GM12878 (cell line): ENCODE measurements at regions of chr1 and their contacts with region 1.

Region 1: DNA sequence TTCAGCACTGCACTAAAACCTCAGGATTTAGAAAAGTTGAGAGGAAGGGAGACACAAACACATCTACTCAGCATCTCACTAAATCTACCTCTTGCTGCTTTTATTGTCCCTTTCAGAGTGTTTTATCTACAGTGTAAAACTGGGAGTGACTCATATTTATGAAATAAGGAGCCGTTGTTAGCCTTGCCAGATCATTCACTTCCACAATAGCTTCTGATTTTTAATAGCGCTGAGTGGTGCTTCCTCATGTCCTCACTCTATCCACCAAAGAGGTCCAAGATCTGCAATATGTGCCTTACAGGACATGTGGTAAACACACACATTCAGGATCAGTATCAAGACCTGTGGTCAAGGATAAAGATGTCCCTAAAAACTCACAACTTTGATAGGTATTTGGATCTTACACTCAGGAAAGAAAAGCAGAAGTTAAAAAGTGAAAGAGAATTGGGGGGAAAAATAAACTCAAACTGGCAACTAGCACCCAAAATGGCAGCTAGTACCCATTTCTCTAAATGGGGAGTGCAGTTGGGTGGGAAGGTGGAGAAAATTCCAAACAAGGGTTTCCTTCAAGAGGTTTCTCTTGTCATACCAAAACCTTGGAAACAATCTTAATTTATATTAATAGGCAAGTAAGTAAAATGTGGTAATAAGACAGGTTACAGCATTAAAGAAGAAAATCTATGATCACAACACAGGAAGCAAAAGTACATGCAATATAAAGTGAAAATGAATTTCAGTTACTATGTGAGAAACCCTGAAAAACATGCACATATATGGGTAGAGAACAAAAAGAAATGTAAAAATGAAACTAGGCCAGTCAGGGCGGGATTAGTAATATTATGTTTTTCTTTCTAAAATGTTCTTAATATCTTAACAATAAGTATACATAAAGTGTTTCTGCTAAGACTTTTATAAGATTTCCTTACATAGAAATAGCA is 15.9 kb downstream of the DUSP10 start:
- DNase-seq: no peak
- ATAC-seq: peak; percentile 67
- H3K4me3 ChIP-seq: peak overlapping the region; percentile 6; the same call in 1 of the 2 replicates
- H3K27ac ChIP-seq: peak overlapping the region; percentile 92
- H3K4me1 ChIP-seq: peaks cover 52% of the 10 kb centered on the region
- H3K27me3 ChIP-seq: no peaks in the 10 kb centered on the region
- CTCF ChIP-seq: no peak
- EP300 ChIP-seq: no peak
- POLR2A ChIP-seq: no peak
- RAD21 ChIP-seq: no peak

Region 2: GRCh38 chr1:221449801-221450470 is 276.1 kb before region 1 on chr1:
- CTCF ChIA-PET with region 1: no interaction called
- POLR2A ChIA-PET with region 1: no interaction called
- RAD21 ChIA-PET with region 1: no interaction called
- SMC1A ChIA-PET with region 1: no interaction called
- in situ Hi-C with region 1: no loop called
- intact Hi-C with region 1: no loop called
- DNase-seq: no peak
- ATAC-seq: peak; percentile 78
- H3K4me3 ChIP-seq: no peak overlapping the region
- H3K27ac ChIP-seq: no peak overlapping the region
- H3K4me1 ChIP-seq: no peaks in the 10 kb centered on the region
- H3K27me3 ChIP-seq: no peaks in the 10 kb centered on the region
- CTCF ChIP-seq: no peak
- EP300 ChIP-seq: no peak
- POLR2A ChIP-seq: no peak
- RAD21 ChIP-seq: no peak

Region 3: GRCh38 chr1:221680085-221680484 is 45.9 kb before region 1 on chr1:
- CTCF ChIA-PET with region 1: no interaction called
- POLR2A ChIA-PET with region 1: no interaction called
- RAD21 ChIA-PET with region 1: no interaction called
- SMC1A ChIA-PET with region 1: no interaction called
- in situ Hi-C with region 1: no loop called
- intact Hi-C with region 1: no loop called
- DNase-seq: no peak
- ATAC-seq: no peak
- H3K4me3 ChIP-seq: no peak overlapping the region
- H3K27ac ChIP-seq: no peak overlapping the region
- H3K4me1 ChIP-seq: no peaks in the 10 kb centered on the region
- H3K27me3 ChIP-seq: no peaks in the 10 kb centered on the region
- CTCF ChIP-seq: no peak
- EP300 ChIP-seq: no peak
- POLR2A ChIP-seq: no peak
- RAD21 ChIP-seq: no peak

Region 4: DNA sequence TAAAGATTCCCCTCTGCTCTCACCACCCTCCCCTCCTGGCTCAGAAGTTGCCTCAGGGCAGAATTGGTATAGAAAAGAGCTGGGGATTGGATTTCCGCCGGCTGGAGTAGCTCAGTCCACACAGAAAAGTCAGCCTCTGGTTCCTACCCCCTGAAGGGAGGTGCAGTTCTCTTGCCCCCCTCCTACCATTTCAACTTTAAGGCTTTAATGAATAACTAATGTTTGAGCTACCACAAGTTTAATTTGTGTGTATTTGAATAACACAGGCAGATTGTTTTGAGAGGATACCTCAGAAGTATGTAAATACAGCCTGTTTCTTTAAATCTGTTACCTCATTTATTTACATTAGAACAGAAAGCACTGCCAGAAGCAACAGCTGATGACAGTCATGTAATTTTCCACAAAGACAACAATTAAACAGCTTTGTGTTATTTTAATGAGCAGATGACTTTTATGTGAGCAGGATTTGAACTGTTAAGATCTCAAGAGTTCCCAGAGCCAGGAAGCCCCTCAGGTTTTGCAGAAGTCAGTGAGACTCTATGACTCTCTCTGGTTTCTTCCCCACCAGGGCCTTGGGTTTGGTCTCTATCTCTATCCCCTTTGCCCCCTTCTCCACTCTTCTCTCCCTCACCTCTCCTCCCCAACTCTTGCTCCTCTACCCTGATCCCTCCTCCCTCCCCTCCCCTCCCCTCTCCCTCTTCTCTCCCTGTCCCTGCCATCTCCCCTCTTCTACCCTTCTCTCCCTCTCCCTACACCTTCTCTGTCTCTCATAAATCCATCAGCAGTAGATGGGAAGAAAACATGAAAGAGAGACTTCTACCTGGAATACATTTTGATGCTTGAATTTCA is 10.5 kb before region 1 on chr1:
- CTCF ChIA-PET with region 1: interaction called, 29 read pairs
- POLR2A ChIA-PET with region 1: interaction called, 194 read pairs
- RAD21 ChIA-PET with region 1: interaction called, 85 read pairs
- SMC1A ChIA-PET with region 1: interaction called, 292 read pairs
- in situ Hi-C with region 1: no loop called
- intact Hi-C with region 1: loop called (anchors 1 kb)
- DNase-seq: no peak
- ATAC-seq: no peak
- H3K4me3 ChIP-seq: no peak overlapping the region
- H3K27ac ChIP-seq: peak overlapping the region; percentile 25; the same call in 1 of the 2 replicates
- H3K4me1 ChIP-seq: peaks cover 32% of the 10 kb centered on the region
- H3K27me3 ChIP-seq: no peaks in the 10 kb centered on the region
- CTCF ChIP-seq: no peak
- EP300 ChIP-seq: no peak
- POLR2A ChIP-seq: no peak
- RAD21 ChIP-seq: no peak